Mammary epithelial cell (primary cell): ENCODE measurements at regions of chr7 and their contacts with region 1.

Region 1: DNA sequence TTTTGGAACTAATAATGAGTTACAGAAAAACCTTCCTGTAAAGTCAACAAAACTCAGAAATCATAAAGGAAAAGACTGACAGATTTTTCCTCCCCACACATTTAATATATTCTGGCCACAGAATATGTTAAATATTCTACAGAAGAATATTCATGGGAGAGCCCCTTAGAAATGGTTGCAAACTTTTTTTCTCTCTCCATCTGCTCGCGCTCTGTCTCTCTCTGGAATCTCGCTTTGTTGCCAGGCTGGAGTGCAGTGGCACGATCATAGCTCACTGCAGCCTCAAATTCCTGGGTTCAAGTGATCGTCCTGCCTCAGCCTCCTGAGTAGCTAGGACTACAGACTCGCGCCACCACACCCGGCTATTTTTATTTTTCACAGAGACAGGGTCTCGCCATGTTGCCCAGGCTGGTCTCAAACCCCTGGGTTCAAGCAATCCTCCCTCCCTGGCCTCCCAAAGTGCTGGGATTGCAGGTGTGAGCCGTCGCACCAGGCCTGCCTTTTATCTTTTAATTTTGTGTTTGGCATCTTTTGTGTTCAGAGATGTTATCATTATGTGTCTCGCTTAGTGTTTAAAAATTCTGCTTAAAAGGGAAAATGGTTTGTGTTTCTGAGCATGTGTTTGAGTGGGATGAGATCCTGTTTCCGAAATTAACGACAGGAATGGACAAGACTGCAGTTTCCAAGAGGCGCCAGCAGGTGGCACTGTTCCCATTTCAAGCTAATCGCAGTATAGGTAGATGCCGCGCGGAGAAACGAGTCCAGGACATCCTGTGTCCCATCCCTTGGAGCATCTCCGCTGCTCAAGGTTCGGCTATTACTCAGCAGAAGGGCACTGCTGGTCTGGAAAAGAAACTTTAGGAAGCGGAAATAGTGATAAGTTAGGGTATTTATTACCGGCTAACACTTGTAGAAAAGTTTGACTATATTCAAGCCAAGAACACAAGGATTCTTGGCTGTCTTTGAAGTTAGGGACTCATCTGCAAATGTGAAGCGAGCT is 23.1 kb upstream of the ST7 start:
- DNase-seq: peak; percentile 61
- H3K4me3 ChIP-seq: no peak overlapping the region
- H3K27ac ChIP-seq: no peak overlapping the region
- H3K4me1 ChIP-seq: peaks cover 6% of the 10 kb centered on the region
- H3K27me3 ChIP-seq: no peaks in the 10 kb centered on the region
- CTCF ChIP-seq: peak; percentile 92

Region 2: DNA sequence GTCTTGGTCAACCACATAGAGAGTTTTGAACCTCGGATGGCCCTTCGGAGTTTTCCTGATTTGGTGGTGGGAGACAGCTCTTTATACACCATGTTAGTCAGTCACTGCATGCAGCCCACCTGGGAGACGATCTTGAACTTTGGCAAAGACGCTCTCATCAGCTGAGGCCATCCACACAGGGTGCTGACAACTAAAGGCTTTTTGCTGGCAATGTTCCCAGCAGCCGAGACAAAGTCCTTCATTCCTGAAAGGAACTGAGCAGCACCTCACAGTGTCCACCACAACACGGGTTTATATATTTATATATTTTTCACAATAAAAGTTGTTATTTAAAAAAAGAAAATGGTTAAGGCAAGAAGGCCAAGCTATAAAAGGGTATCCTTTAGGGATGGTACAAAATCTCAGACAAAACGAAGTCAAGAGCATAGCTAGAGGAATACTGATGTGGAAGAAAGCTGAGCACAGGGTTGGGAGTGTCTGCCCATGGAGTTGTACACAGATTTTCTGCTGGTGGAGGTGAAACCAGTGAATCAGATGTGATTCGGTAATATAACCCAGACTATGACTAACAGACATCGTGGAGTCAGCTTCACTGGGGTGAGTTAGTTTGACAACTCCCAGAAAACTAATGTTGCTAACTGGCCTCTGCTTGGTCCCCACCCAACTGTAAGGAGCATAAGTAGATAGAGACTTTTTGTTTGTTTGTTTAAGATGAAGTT is 95.2 kb before region 1 on chr7:
- CTCF ChIA-PET with region 1: no interaction called
- dilution Hi-C with region 1: no loop called
- in situ Hi-C with region 1: no loop called
- intact Hi-C with region 1: no loop called
- DNase-seq: peak; percentile 87
- H3K4me3 ChIP-seq: no peak overlapping the region
- H3K27ac ChIP-seq: no peak overlapping the region
- H3K4me1 ChIP-seq: peaks cover 12% of the 10 kb centered on the region
- H3K27me3 ChIP-seq: no peaks in the 10 kb centered on the region
- CTCF ChIP-seq: no peak

Region 3: DNA sequence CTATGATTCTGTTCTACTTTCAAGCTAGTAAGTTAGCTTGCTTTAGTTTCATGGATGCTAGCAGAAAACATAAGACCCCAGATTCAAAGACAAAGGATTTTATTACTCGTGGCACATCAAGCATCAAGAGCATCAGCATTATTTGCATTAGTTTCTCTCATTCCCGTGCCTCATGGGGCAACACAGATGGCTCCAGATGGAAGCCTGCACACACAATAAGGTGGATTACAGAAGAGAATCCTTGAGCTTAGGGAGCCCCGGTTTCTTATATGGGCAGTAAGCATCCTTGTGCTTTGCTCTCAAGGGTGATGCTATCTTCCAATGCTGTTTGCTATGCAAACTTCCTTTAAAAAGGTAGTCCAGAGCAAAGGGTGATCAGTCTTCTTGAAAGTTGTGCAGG is 78.5 kb before region 1 on chr7:
- CTCF ChIA-PET with region 1: no interaction called
- dilution Hi-C with region 1: no loop called
- in situ Hi-C with region 1: no loop called
- intact Hi-C with region 1: no loop called
- DNase-seq: no peak
- H3K4me3 ChIP-seq: no peak overlapping the region
- H3K27ac ChIP-seq: no peak overlapping the region
- H3K4me1 ChIP-seq: no peaks in the 10 kb centered on the region
- H3K27me3 ChIP-seq: no peaks in the 10 kb centered on the region
- CTCF ChIP-seq: no peak

Region 4: GRCh38 chr7:116984917-116985316 is 54.7 kb after region 1 on chr7:
- CTCF ChIA-PET with region 1: no interaction called
- dilution Hi-C with region 1: no loop called
- in situ Hi-C with region 1: no loop called
- intact Hi-C with region 1: loop called (anchors 5 kb)
- DNase-seq: no peak
- H3K4me3 ChIP-seq: no peak overlapping the region
- H3K27ac ChIP-seq: no peak overlapping the region
- H3K4me1 ChIP-seq: peaks cover 9% of the 10 kb centered on the region
- H3K27me3 ChIP-seq: no peaks in the 10 kb centered on the region
- CTCF ChIP-seq: peak; percentile 63 to 82

Region 5: GRCh38 chr7:117114272-117114671 is 184.1 kb after region 1 on chr7:
- CTCF ChIA-PET with region 1: interaction called, 20 read pairs
- dilution Hi-C with region 1: no loop called
- in situ Hi-C with region 1: loop called in 1 of 2 experiments (anchors 5 kb)
- intact Hi-C with region 1: loop called (anchors 1 kb)
- DNase-seq: no peak
- H3K4me3 ChIP-seq: no peak overlapping the region
- H3K27ac ChIP-seq: no peak overlapping the region
- H3K4me1 ChIP-seq: no peaks in the 10 kb centered on the region
- H3K27me3 ChIP-seq: no peaks in the 10 kb centered on the region
- CTCF ChIP-seq: no peak

Region 6: GRCh38 chr7:117127585-117128168 is 197.5 kb after region 1 on chr7:
- CTCF ChIA-PET with region 1: interaction called, 4 read pairs
- dilution Hi-C with region 1: no loop called
- in situ Hi-C with region 1: no loop called
- intact Hi-C with region 1: loop called (anchors 1 kb)
- DNase-seq: peak; percentile 31
- H3K4me3 ChIP-seq: no peak overlapping the region
- H3K27ac ChIP-seq: no peak overlapping the region
- H3K4me1 ChIP-seq: peaks cover 28% of the 10 kb centered on the region
- H3K27me3 ChIP-seq: no peaks in the 10 kb centered on the region
- CTCF ChIP-seq: peak; percentile 73

Region 7: DNA sequence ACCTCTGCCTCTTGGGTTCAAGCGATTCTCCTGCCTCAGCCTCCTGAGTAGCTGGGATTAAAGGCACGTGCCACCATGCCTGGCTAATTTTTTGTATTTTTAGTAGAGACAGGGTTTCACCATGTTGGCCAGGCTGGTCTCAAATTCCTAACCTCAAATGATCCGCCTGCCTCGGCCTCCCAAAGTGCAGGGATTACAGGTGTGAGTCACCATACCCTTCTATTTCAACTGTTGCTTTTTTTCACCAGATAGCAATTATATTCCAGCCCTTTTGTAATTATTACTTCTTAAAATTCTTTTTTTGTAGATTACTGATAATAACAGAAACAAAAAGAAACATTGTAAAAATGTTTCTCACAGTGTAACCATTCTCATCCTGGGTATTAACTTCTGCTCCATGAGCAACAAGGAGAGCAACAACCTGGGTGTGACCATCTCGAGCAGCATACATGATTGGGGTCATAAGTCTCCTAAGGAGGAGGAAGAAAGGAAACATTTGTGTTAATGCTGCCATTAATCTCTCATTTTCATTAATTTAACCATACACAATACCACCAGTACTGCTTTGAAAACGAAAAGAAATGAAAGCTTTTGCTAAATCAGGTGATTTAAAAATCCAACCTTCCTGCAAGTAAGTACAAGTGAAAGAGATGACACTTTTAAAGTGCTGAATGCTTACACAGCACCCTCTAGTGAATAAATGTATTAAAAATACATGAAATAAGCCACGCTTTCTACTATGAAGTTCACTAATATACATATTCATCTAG is 455.3 kb after region 1 on chr7:
- CTCF ChIA-PET with region 1: no interaction called
- dilution Hi-C with region 1: no loop called
- in situ Hi-C with region 1: loop called in 1 of 2 experiments (anchors 25 kb)
- intact Hi-C with region 1: loop called (anchors 1 kb)
- DNase-seq: peak; percentile 19
- H3K4me3 ChIP-seq: no peak overlapping the region
- H3K27ac ChIP-seq: no peak overlapping the region
- H3K4me1 ChIP-seq: no peaks in the 10 kb centered on the region
- H3K27me3 ChIP-seq: no peaks in the 10 kb centered on the region
- CTCF ChIP-seq: peak in 1 of 2 donors; percentile 54